ENCODE measurements at regions of chr20 and their contacts with region 1.

Region 1: GRCh38 chr20:57514273-57514751 is 10.6 kb downstream of the CTCFL start:
- DNase-seq: peak; percentile 75 to 79
- H3K4me3 ChIP-seq: no peak overlapping the region
- H3K27ac ChIP-seq: no peak overlapping the region
- H3K4me1 ChIP-seq: peaks cover 0 to 10% of the 10 kb centered on the region in 2 donors
- H3K27me3 ChIP-seq: no peaks in the 10 kb centered on the region
- CTCF ChIP-seq: peak; percentile 54 to 91 (median 78)
- POLR2A ChIP-seq: no peak

Region 2: GRCh38 chr20:57089691-57090150 is 424.6 kb before region 1 on chr20:
- intact Hi-C with region 1: loop called (anchors 10 kb)
- DNase-seq: peak; percentile 80 to 86
- H3K4me3 ChIP-seq: no peak overlapping the region
- H3K27ac ChIP-seq: no peak overlapping the region
- H3K4me1 ChIP-seq: no peaks in the 10 kb centered on the region
- H3K27me3 ChIP-seq: no peaks in the 10 kb centered on the region
- CTCF ChIP-seq: peak; percentile 72 to 99 (median 94)
- POLR2A ChIP-seq: no peak

Region 3: DNA sequence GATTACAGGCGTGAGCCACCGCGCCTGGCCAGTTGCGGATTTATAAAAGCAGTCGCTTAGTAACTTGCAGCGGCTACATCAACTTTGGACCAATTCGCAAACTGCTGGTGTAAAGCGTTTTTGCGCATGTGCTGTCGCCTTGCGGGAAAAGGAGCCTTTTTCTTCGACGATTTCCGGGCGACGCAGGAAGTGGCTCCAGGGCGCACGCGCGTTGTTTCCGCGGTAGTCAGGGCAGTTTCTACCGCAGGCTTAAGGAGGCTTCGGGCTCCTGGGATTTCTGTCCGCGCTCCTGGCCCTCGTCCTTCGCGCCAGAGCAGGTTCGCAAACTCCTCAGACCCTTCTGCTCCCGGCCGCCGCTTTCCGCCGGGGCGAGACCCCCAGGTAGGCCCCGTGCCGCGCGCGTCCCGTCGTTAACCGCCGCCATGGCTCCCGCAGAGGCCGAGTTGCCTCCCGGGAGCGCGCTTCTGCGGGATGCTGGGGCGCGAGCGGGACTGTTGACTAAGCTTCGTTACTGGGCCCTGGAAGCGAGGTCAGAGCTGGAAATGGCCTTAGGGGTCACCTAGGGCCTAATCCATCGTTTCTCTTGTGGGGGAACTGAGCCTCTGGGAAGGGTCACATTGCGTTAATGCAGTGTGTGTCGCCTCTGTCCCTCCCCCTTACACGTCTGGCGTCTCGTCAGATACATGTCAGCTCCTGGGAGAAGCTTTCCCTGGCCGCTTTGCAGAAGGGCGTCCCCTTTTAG is 163.1 kb before region 1 on chr20 and contains the start of gene RAE1:
- intact Hi-C with region 1: no loop called
- DNase-seq: peak; percentile 90 to 92
- H3K4me3 ChIP-seq: peak within 1 kb of the TSS; percentile 65 to 95 (median 90)
- H3K27ac ChIP-seq: peak within 1 kb of the TSS; percentile 77 to 82 (median 82)
- H3K4me1 ChIP-seq: peaks cover 0 to 9% of the 10 kb centered on the region in 2 donors
- H3K27me3 ChIP-seq: no peaks in the 10 kb centered on the region
- CTCF ChIP-seq: no peak
- POLR2A ChIP-seq: peak in 1 of 2 donors; percentile 57
- total RNA-seq, gene RAE1: 17.5 to 26.4 (median 22.3) TPM

Region 4: GRCh38 chr20:57596998-57597939 is 83.0 kb after region 1 on chr20:
- intact Hi-C with region 1: loop called (anchors 2 kb)
- DNase-seq: peak; percentile 63 to 68
- H3K4me3 ChIP-seq: no peak overlapping the region
- H3K27ac ChIP-seq: no peak overlapping the region
- H3K4me1 ChIP-seq: peaks cover 2 to 7% of the 10 kb centered on the region in 2 donors
- H3K27me3 ChIP-seq: no peaks in the 10 kb centered on the region
- CTCF ChIP-seq: peak; percentile 68 to 97 (median 88)
- POLR2A ChIP-seq: no peak

Region 5: DNA sequence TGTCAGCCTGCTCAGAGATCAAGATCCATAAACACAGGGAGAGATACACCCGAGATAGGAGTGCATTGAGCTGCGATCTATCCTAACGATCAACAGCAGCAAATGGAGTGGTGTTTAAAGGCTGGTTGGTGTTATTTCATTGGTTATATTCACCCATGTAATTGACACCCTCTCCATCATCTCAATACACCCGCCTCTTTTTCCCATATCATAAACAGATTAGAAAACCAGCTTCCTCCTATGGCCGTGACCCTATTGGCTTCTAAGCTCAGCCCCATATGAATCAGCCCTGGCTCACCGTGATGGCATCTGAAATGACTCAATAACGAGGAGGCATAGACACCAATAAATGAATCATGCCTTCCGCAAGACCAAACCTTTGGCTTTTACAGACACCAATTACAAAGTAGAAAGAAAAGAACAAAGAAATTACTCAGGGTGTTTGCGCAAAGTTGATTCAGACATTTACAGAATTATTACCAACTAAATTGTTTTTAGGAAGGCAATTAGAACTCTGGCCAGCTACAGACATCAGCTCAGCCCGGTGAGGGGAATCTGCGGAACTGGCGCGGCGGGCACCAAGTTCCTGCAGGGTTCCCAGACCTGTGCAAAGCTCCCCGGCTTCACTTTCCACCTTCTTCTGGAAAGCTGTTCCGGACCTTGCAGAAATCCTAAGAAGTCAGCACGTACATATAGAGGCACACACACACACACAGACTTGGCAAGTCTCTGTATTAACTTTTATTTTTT is 184.0 kb after region 1 on chr20:
- intact Hi-C with region 1: no loop called
- DNase-seq: no peak
- H3K4me3 ChIP-seq: no peak overlapping the region
- H3K27ac ChIP-seq: no peak overlapping the region
- H3K4me1 ChIP-seq: peaks cover 0 to 4% of the 10 kb centered on the region in 2 donors
- H3K27me3 ChIP-seq: no peaks in the 10 kb centered on the region
- CTCF ChIP-seq: no peak
- POLR2A ChIP-seq: no peak

Region 6: GRCh38 chr20:58209652-58210397 is 695.5 kb after region 1 on chr20:
- intact Hi-C with region 1: loop called (anchors 5 kb)
- DNase-seq: peak; percentile 78 to 82
- H3K4me3 ChIP-seq: no peak overlapping the region
- H3K27ac ChIP-seq: no peak overlapping the region
- H3K4me1 ChIP-seq: no peaks in the 10 kb centered on the region
- H3K27me3 ChIP-seq: no peaks in the 10 kb centered on the region
- CTCF ChIP-seq: peak; percentile 98 to 100 (median 100)
- POLR2A ChIP-seq: no peak